ENCODE measurements at regions of chr4 and their contacts with region 1.

Region 1: GRCh38 chr4:1167247-1167949 is 5.0 kb downstream of the SPON2 start:
- DNase-seq: peak; percentile 66 to 96 (median 80)

Region 2: DNA sequence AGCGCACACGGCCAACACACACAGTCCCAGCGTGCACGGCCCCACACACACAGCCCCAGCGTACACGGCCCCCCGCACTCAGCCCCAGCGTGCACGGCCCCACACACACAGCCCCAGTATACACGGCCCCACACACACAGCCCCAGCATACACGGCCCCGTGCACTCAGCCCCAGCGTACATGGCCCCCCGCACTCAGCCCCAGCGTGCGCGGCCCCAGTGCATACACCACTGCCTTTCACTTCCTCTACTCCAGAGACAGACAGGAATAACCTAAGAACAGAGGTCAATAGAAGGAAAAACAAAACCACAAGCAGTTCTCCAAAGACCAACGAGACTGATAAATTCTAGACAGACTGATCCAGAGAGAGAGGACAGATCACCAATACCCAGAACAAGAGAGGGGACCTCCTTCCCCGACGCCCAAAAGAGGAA is 252.3 kb before region 1 on chr4:
- intact Hi-C with region 1: no loop called
- DNase-seq: peak in 4 of 10 donors; percentile 4 to 77 (median 44)

Region 3: DNA sequence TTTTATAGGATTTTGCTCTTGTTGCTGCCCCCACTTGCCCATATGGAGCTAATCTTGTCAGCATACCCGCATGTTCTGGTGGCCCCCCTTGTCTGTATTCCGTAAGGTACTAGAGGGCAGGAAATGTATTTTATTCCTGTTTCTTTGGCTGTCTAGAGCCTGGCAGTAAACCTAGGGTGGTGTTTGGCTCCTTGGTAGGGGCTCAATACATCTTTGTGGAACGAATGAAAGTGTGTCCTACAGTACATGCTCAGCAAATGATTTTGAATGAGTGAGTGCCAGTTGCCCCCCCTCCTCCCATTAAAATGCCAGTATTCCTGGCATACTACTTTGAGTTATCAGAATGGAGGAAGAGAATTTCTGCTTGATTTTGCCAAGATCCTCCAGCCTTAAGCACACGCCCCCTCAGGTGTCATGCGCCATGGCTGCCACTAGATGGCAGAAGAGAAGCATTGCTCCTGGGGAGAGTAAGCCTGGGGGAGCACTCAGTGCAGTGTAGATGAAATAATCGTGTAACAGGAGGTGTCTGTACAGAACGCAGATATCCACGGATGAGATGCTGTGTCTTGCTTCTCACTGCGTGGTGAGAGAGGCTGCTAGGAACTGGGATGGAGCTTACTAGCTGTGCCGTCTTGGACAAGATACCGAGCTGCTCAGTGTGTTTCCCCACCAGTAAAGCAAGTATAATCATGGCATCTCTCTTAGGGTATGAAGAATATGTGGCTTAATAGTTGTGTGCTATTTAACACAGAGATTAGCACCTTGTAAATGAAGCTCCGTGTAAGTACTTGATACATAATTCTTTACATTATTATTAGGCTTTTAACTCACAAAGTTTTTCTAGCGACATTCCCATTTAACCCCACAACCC is 36.8 kb before region 1 on chr4:
- intact Hi-C with region 1: loop called (anchors 2 kb)
- DNase-seq: peak; percentile 51 to 94 (median 76)

Region 4: DNA sequence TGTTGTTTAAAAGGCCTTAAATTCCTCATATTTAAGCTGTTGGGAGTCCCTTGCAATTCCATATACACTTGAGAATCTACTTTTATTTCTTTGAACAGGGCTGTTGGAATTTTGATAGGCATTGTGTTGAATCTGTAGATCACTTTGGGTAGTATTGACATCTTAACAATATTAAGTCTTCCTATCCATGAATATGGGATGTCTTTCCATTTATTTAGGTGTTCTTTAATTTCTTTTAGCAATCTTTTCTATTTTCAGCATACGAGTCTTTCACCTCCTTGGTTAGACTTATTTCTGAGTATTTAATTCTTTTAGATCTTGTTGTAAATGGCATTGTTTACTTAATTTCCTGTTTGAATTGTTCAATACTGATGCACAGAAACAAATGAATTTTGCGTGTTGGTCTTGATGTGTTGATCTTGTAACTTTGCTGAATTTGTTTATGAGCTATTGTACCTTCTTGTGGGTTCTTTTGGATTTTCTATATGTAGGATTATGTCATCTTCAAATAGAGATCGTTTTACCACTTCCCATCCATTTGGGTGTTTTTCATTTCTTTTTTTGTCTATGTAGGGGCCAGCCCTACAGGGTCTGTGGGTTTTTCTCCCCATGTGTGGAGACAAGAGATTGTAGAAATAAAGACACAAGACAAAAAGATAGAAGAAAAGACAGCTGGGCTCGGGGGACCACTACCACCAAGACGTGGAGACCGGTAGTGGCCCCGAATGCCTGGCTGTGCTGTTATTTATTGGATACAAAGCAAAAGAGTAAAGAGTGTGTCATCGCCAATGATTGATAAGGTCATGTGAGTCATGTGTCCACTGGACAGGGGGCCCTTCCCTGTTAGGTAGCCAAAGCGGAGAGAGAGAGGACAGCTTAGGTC is 99.7 kb after region 1 on chr4:
- intact Hi-C with region 1: loop called (anchors 5 kb)
- DNase-seq: no peak

Region 5: DNA sequence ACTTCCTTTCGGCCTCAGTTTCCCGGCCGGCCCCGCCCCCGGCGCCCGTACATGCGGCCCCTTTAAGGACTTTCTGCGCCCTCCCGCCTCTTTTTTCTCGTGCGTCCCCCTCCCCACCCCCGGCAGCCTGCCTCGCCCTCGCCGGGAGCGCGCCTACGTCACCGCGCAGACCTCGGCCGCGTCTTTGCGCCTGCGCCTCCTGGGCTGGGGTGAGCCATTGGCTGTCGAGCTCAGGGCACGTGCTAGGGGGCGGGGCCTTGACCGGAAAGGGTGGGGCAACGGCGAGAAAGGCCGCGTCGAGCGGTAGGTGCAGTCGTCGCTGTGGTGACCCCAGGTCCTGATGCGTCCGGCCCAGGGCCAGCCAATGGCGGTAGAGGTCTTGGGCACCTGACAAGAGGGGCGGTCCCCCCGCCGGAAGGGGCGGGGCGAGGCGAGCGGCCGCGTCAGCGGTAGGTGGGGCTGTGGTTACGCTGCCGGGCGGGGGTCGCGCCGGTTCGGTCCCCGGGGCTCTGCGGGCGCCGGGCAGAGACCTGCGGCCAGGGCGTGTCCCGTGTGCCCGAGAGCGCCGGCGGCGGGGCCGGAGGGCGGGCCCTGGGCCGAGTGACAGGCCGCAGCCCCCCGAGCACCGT is 179.5 kb after region 1 on chr4 and contains the start of gene UVSSA:
- intact Hi-C with region 1: loop called (anchors 10 kb)
- DNase-seq: peak; percentile 100

Region 6: GRCh38 chr4:1519787-1520661 is 352.6 kb after region 1 on chr4:
- intact Hi-C with region 1: no loop called
- DNase-seq: peak in 6 of 10 donors; percentile 3 to 76 (median 40)